ENCODE measurements at regions of chr1 and their contacts with region 1.

Region 1: GRCh38 chr1:153946622-153947241 is at the start of gene DENND4B:
- DNase-seq: peak; percentile 67 to 87 (median 80)
- H3K4me3 ChIP-seq: peak within 1 kb of the TSS; percentile 71 to 98 (median 84)
- H3K27ac ChIP-seq: peak within 1 kb of the TSS; percentile 83 to 99 (median 95)
- H3K27me3 ChIP-seq: no peaks in the 10 kb centered on the region
- CTCF ChIP-seq: peak; percentile 71 to 97 (median 90)
- total RNA-seq, gene DENND4B: 81.7 to 180 (median 112) TPM

Region 2: GRCh38 chr1:153816283-153816889 is 130.3 kb before region 1 on chr1:
- intact Hi-C with region 1: loop called (anchors 2 to 5 kb)
- DNase-seq: no peak
- H3K4me3 ChIP-seq: no peak overlapping the region
- H3K27ac ChIP-seq: peak overlapping the region in 2 of 59 donors; percentile 14 to 29
- H3K27me3 ChIP-seq: no peaks in the 10 kb centered on the region
- CTCF ChIP-seq: no peak

Region 3: GRCh38 chr1:153880962-153881361 is 65.8 kb before region 1 on chr1:
- intact Hi-C with region 1: loop called in 1 of 2 experiments (anchors 2 kb)
- DNase-seq: peak; percentile 81 to 97 (median 90)
- H3K4me3 ChIP-seq: peak overlapping the region in 58 of 59 donors; percentile 4 to 60 (median 40)
- H3K27ac ChIP-seq: peak overlapping the region in 55 of 59 donors; percentile 11 to 83 (median 62)
- H3K27me3 ChIP-seq: no peaks in the 10 kb centered on the region
- CTCF ChIP-seq: peak in 11 of 56 donors; percentile 10 to 40 (median 22)

Region 4: DNA sequence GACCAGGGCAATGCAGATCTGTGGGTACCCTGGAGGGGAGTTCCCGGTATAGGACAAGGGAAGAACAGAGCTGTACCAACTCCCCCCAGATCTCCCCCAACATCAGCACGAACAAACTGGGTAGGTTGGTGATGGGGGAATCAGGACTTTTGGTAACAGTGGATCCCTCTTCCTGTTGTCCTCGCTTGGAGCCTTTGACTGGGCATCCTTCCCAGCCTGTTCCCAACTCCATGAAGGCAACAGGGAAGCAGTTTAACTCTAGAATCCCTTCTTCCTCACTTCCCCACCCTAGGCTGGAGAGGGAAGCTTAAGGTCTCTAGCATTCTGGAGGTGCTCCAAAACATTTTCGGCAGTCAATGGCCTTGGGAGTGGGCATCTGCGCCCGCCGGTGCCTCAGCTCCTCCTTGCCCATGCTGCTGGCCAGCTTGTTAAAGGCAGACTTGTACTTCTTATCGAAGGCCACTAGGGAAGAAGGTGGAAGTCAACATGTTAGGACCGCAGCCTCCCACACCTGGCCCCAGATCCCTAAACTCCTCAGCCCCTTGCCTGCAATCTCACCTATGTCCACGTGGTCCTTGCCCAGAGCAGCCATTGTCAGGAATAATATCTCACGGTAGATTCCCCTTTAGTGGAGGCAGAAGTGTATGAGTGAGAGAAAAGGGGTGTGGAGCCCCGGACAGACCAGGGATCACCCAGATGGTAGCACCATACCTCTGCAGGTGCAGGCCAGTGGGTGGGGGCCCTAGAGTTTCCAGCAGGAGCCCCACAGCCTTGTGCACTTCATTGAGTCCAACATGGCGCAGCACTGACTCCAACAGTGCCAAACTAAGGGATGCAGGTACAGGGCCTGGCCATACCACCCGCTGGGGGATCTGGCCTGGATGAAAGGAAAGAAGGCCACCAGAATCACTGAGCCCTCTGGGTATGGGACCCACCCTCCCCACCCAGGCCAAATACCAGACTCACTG is 16.5 kb before region 1 on chr1:
- intact Hi-C with region 1: loop called in 1 of 2 experiments (anchors 2 kb)
- DNase-seq: peak in 1 of 10 donors; percentile 33
- H3K4me3 ChIP-seq: peak overlapping the region in 1 of 59 donors; percentile 2
- H3K27ac ChIP-seq: peak overlapping the region; percentile 79 to 100 (median 97)
- H3K27me3 ChIP-seq: no peaks in the 10 kb centered on the region
- CTCF ChIP-seq: peak in 1 of 56 donors; percentile 12

Region 5: GRCh38 chr1:153977250-153978240 is 30.8 kb after region 1 on chr1 and contains the start of gene JTB:
- intact Hi-C with region 1: no loop called
- DNase-seq: peak; percentile 80 to 95 (median 92)
- H3K4me3 ChIP-seq: peak within 1 kb of the TSS; percentile 66 to 100 (median 97)
- H3K27ac ChIP-seq: peak within 1 kb of the TSS; percentile 73 to 99 (median 93)
- H3K27me3 ChIP-seq: no peaks in the 10 kb centered on the region
- CTCF ChIP-seq: peak in 32 of 56 donors; percentile 5 to 58 (median 33)
- total RNA-seq, gene JTB: 59.2 to 132 (median 78.9) TPM